Psoas muscle (tissue), 8 donors: ENCODE measurements at regions of chr17 and their contacts with region 1.

Region 1: GRCh38 chr17:61412143-61412859 is 12.7 kb downstream of the TBX2 start:
- DNase-seq: peak; percentile 84 to 90
- ATAC-seq: peak; percentile 81 to 89 (median 86)
- H3K4me3 ChIP-seq: peak overlapping the region; percentile 72
- H3K27ac ChIP-seq: peak overlapping the region; percentile 71
- H3K4me1 ChIP-seq: peaks cover 21% of the 10 kb centered on the region
- H3K27me3 ChIP-seq: peaks cover 0 to 27% (median 6%) of the 10 kb centered on the region in 3 donors
- CTCF ChIP-seq: peak; percentile 100

Region 2: GRCh38 chr17:60720763-60721531 is 691.4 kb before region 1 on chr17:
- intact Hi-C with region 1: loop called in 1 of 2 experiments (anchors 5 kb)
- DNase-seq: no peak
- ATAC-seq: peak in 2 of 4 donors; percentile 42 to 69
- H3K4me3 ChIP-seq: no peak overlapping the region
- H3K27ac ChIP-seq: no peak overlapping the region
- H3K4me1 ChIP-seq: no peaks in the 10 kb centered on the region
- H3K27me3 ChIP-seq: no peaks in the 10 kb centered on the region
- CTCF ChIP-seq: peak; percentile 89

Region 3: GRCh38 chr17:61551255-61551742 is 139.0 kb after region 1 on chr17:
- intact Hi-C with region 1: loop called (anchors 1 to 2 kb)
- DNase-seq: no peak
- ATAC-seq: no peak
- H3K4me3 ChIP-seq: no peak overlapping the region
- H3K27ac ChIP-seq: no peak overlapping the region
- H3K4me1 ChIP-seq: no peaks in the 10 kb centered on the region
- H3K27me3 ChIP-seq: peaks cover 0 to 10% (median 0%) of the 10 kb centered on the region in 3 donors
- CTCF ChIP-seq: peak; percentile 54

Region 4: GRCh38 chr17:61837175-61838051 is 425.1 kb after region 1 on chr17:
- intact Hi-C with region 1: loop called (anchors 2 to 5 kb)
- DNase-seq: peak; percentile 21 to 51
- ATAC-seq: peak in 2 of 4 donors; percentile 58 to 72
- H3K4me3 ChIP-seq: no peak overlapping the region
- H3K27ac ChIP-seq: no peak overlapping the region
- H3K4me1 ChIP-seq: no peaks in the 10 kb centered on the region
- H3K27me3 ChIP-seq: no peaks in the 10 kb centered on the region
- CTCF ChIP-seq: peak; percentile 67

Region 5: DNA sequence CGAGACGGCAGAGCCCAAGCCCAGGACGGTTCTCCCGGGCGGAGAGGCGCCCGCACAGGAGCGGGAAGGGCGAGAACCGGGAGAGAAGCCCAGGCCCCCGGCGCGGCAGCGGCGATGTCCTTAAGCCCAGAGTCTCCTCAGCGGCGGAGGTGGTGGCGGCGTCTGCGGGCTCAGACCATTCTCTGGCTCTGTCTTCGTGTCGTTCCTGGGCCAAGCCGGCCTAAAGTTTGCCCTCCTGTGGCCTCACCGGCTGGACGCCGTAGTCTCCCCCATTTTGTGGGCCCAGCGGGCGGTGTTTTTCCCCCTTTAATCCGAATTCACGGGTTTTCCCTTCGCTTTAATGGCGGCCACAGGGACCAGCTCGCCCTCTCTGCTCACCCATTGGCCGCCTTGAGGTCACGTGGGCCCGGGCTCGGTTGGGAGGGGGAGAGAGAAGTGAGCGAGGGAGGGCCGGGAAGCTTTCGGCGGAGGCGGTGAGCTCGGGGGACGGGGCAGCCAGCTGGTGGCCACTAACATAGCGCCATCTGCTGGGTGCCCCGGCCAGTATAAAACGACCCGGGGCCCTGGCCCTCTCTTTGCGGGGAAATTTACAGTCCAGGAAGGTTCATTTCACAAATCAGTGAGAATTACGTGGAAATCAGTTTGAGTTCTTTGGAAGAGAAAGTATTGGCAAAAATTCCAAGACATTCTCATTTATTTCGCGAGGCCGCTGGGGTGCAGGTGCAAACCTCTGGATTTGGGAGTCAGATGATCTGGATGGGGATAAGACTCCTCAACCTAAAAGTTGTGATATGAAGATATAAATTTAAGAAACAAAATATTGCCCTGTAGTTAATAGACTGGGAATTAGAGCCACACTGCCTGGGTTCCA is 653.5 kb after region 1 on chr17:
- intact Hi-C with region 1: loop called (anchors 5 to 10 kb)
- DNase-seq: peak; percentile 99 to 100
- ATAC-seq: peak; percentile 94 to 98 (median 98)
- H3K4me3 ChIP-seq: peak overlapping the region; percentile 95
- H3K27ac ChIP-seq: peak overlapping the region; percentile 99
- H3K4me1 ChIP-seq: peaks cover 21% of the 10 kb centered on the region
- H3K27me3 ChIP-seq: no peaks in the 10 kb centered on the region
- CTCF ChIP-seq: peak; percentile 90